Activated CD4-positive, alpha-beta T cell treated with anti-CD3 and anti-CD28 coated beads for 36 hours (primary cell): ENCODE measurements at regions of chr9 and their contacts with region 1.

Region 1: DNA sequence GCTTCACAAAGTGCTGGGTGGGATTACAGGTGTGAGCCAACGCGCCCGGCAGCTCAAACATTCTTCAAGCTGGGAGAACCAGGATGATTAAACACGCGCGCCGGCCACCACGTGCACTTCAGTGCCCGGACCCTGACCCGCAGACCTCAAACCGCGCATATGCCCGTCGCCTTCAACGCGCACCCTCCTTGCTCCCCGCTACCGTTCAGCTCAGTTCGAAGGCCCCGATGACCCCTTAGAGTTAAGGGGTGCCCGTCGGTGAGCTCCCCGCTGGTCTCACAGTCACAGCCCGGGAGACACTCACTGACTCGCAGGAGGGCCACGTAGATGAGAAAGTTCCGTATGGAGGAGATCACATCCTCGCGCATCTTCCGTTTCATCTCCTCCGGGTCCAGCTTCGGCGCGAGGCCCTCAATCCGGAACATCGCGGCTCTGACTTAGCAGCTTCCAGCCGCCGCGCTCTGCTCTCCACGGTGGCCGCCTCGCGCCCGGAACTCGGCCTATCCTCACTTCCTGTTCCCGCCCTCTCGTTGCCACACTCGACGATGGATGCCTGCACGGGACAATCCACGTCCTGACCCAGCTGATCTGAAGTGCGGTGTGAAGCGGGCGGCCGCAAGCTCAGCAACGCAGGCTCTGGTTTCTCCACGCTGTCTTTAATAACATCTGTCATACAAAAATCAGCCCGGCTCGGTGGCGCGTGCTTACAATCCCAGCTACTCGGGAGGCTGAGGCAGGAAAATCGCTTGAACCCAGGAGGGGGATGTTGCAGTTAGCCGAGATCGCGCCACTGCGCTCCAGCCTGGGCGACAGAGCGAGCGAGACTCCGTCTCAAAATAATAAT is at the start of gene TOMM5:
- DNase-seq: peak; percentile 96
- ATAC-seq: peak; percentile 95
- H3K4me3 Mint-ChIP-seq: peak within 1 kb of the TSS; percentile 100
- H3K27ac Mint-ChIP-seq: peak within 1 kb of the TSS; percentile 98
- H3K4me1 Mint-ChIP-seq: peaks cover 32% of the 10 kb centered on the region
- H3K27me3 Mint-ChIP-seq: peaks cover 9% of the 10 kb centered on the region
- total RNA-seq, gene TOMM5: 118 to 153 TPM

Region 2: GRCh38 chr9:36400332-36401163 is 1191.8 kb before region 1 on chr9:
- CTCF ChIA-PET with region 1: no interaction called
- POLR2A ChIA-PET with region 1: no interaction called
- intact Hi-C with region 1: loop called in 1 of 2 experiments (anchors 2 kb)
- DNase-seq: peak; percentile 96
- ATAC-seq: peak; percentile 77
- H3K4me3 Mint-ChIP-seq: peak overlapping the region; percentile 93
- H3K27ac Mint-ChIP-seq: peak overlapping the region; percentile 98
- H3K4me1 Mint-ChIP-seq: peaks cover 39% of the 10 kb centered on the region
- H3K27me3 Mint-ChIP-seq: no peaks in the 10 kb centered on the region

Region 3: GRCh38 chr9:36765468-36766341 is 826.6 kb before region 1 on chr9:
- CTCF ChIA-PET with region 1: no interaction called
- POLR2A ChIA-PET with region 1: no interaction called
- intact Hi-C with region 1: loop called in 1 of 2 experiments (anchors 5 kb)
- DNase-seq: peak; percentile 95
- ATAC-seq: peak; percentile 99
- H3K4me3 Mint-ChIP-seq: no peak overlapping the region
- H3K27ac Mint-ChIP-seq: peak overlapping the region; percentile 16
- H3K4me1 Mint-ChIP-seq: peaks cover 2% of the 10 kb centered on the region
- H3K27me3 Mint-ChIP-seq: peaks cover 6% of the 10 kb centered on the region

Region 4: GRCh38 chr9:37415011-37415719 is 177.2 kb before region 1 on chr9:
- CTCF ChIA-PET with region 1: no interaction called
- POLR2A ChIA-PET with region 1: no interaction called
- intact Hi-C with region 1: loop called (anchors 2 to 5 kb)
- DNase-seq: peak; percentile 88
- ATAC-seq: peak; percentile 72
- H3K4me3 Mint-ChIP-seq: no peak overlapping the region
- H3K27ac Mint-ChIP-seq: peak overlapping the region; percentile 75
- H3K4me1 Mint-ChIP-seq: peaks cover 28% of the 10 kb centered on the region
- H3K27me3 Mint-ChIP-seq: no peaks in the 10 kb centered on the region

Region 5: DNA sequence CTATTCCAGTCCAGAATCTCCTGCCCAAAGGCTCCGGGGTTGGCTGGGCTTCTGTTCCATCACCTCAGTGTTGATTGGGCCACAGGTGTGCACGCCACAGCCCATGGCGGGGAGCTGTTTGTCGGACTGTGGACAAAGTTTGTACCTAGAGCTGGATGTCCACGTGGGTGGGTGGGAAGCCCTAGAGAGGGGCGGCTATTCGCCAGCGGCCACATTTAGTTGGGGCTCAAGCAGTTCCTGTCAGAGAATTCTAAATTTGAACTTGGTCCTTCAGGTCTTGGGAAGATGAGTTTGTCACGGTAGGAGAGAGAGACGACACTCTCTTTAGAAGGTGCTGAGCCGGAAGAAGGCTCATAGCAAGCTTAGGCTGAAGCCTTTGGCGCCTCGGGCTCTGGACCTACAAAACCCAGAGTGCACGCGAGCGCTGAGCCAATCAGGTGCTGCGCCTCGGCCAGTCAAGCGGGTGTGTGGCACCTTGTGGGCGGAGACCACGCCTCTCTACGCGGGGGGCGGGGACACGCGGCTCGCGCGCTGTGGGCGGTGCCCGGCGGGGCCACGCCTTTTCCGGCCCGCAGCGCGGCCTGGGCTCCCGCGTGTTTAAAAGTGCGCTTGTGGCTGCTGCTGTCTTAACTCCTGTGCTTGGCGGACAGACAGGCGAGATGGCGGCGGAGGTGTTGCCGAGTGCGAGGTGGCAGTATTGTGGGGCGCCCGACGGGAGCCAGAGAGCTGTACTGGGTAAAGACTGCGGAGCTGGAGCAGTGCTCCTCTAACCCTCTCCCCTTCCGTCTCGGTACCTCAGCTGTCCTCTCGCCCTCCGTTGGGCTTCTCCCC is 106.7 kb before region 1 on chr9 and contains the start of gene POLR1E:
- CTCF ChIA-PET with region 1: interaction called, 8 read pairs
- POLR2A ChIA-PET with region 1: no interaction called
- intact Hi-C with region 1: loop called (anchors 1 kb)
- DNase-seq: peak; percentile 98
- ATAC-seq: peak; percentile 97
- H3K4me3 Mint-ChIP-seq: peak within 1 kb of the TSS; percentile 94
- H3K27ac Mint-ChIP-seq: peak within 1 kb of the TSS; percentile 93
- H3K4me1 Mint-ChIP-seq: peaks cover 41% of the 10 kb centered on the region
- H3K27me3 Mint-ChIP-seq: peaks cover 7% of the 10 kb centered on the region
- total RNA-seq, gene POLR1E: 67.5 to 69.2 TPM

Region 6: DNA sequence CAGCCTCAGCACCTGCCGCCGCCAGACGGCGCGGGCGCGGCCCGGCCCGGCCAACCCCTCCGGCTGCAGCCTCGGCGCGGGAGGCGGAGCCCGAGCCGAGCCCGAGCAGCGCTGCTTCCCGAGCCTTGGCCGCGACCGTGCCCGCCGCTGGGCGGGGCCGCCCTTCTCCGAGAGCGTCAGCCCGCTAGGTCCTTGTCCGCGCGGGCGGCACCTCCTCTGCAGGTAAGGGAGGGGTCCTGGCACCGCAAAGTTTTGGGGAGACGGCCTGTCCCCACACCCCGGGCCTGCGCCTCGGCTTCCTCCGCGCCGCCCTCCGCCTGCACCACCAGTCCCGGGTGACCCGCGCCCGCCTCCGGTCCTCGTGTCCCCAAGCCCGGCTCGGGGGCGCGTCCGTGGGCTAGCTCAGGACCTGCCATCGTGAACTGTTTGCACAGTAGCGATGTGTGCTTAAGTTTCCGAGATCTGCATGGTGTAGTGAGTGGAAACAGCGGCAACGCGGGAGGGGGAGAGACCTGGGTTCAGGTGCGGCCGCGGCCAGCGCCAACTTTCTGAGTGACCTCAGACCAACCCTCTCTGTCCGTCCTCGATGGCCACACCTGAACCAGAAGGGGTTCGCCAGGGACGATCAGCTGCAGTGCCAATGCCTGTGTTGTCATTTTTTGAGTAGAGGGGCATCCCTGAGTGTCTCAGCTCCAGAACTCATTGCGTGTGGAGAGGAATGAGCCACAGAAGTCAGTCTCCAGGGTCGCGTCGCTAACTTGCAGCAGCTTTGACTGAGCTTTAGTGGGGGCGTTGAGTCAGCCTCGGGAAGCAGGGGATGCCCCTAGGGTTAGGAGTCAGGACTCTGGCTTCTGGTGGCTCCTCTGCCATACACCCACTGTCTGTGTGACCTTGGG is 58.8 kb after region 1 on chr9 and contains the start of gene FRMPD1:
- CTCF ChIA-PET with region 1: no interaction called
- POLR2A ChIA-PET with region 1: no interaction called
- intact Hi-C with region 1: loop called (anchors 2 to 5 kb)
- DNase-seq: peak; percentile 78
- ATAC-seq: peak; percentile 97
- H3K4me3 Mint-ChIP-seq: peak within 1 kb of the TSS; percentile 63
- H3K27ac Mint-ChIP-seq: no peak within 1 kb of the TSS
- H3K4me1 Mint-ChIP-seq: peaks cover 9% of the 10 kb centered on the region
- H3K27me3 Mint-ChIP-seq: peaks cover 56% of the 10 kb centered on the region
- total RNA-seq, gene FRMPD1: not detected

Region 7: DNA sequence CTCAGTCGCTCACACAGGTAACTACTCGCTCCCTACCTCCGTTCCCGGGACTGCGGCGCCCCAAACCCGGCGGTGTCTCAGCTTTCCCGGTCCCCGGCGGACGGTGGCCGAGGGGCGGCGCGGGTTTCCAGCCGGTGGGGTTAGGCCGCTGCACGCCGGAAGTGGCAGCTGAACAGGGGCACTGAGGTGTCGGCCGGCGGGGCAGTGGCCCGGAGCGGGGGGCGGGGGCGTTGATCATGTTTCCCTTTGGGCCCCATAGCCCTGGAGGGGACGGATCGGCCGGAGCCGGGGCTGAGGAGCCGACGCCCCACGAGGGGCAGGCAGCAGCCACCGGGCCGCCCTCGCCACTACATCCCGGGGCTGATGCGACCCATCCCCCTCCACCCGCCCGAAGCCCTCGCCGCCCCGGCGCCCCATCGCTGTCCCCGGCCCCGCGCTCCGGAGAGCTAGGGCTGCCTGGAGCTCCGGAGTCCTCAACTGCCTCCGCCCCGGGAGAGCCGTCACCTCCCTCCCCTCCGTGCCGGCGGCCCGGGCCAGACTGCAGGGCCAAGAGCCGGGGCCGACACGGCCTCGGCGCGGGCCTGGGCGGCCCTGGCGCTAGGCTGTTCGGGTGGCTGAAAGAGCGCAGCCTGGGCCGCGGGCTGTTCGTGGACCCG is 208.4 kb after region 1 on chr9 and contains the start of gene DCAF10:
- CTCF ChIA-PET with region 1: no interaction called
- POLR2A ChIA-PET with region 1: no interaction called
- intact Hi-C with region 1: loop called in 1 of 2 experiments (anchors 1 kb)
- DNase-seq: peak; percentile 92
- ATAC-seq: peak; percentile 78
- H3K4me3 Mint-ChIP-seq: peak within 1 kb of the TSS; percentile 90
- H3K27ac Mint-ChIP-seq: peak within 1 kb of the TSS; percentile 89
- H3K4me1 Mint-ChIP-seq: peaks cover 35% of the 10 kb centered on the region
- H3K27me3 Mint-ChIP-seq: no peaks in the 10 kb centered on the region
- total RNA-seq, gene DCAF10: 13.9 to 15.4 TPM

Region 8: GRCh38 chr9:38047301-38048251 is 455.2 kb after region 1 on chr9:
- CTCF ChIA-PET with region 1: no interaction called
- POLR2A ChIA-PET with region 1: no interaction called
- intact Hi-C with region 1: no loop called
- DNase-seq: no peak
- ATAC-seq: peak; percentile 42
- H3K4me3 Mint-ChIP-seq: no peak overlapping the region
- H3K27ac Mint-ChIP-seq: no peak overlapping the region
- H3K4me1 Mint-ChIP-seq: peaks cover 6% of the 10 kb centered on the region
- H3K27me3 Mint-ChIP-seq: no peaks in the 10 kb centered on the region